ENCODE measurements at regions of chr9 and their contacts with region 1.

Region 1: DNA sequence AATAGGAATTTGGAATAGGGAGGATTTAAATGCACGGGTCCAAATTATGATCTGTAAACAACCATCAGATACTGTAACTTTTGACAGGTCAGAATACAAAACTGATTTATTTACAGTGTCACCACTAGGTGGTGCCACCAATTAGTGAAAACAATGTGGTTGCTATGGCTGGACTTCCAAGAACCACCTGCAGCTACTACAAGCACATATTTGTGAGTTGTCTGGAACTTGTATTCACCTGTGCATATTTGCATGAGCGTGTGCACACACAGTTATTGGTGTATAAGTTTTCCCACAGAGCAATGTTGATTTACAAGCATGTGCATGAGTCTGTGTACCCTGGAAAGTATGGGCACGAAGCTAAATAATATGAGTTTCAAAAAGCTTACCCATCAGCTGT is 3.0 kb upstream of the HRCT1 start:
- DNase-seq: peak; percentile 39
- H3K4me3 Mint-ChIP-seq: no peak overlapping the region
- H3K27ac Mint-ChIP-seq: no peak overlapping the region
- H3K4me1 Mint-ChIP-seq: peaks cover 34% of the 10 kb centered on the region
- H3K27me3 Mint-ChIP-seq: no peaks in the 10 kb centered on the region
- CTCF ChIP-seq: no peak

Region 2: DNA sequence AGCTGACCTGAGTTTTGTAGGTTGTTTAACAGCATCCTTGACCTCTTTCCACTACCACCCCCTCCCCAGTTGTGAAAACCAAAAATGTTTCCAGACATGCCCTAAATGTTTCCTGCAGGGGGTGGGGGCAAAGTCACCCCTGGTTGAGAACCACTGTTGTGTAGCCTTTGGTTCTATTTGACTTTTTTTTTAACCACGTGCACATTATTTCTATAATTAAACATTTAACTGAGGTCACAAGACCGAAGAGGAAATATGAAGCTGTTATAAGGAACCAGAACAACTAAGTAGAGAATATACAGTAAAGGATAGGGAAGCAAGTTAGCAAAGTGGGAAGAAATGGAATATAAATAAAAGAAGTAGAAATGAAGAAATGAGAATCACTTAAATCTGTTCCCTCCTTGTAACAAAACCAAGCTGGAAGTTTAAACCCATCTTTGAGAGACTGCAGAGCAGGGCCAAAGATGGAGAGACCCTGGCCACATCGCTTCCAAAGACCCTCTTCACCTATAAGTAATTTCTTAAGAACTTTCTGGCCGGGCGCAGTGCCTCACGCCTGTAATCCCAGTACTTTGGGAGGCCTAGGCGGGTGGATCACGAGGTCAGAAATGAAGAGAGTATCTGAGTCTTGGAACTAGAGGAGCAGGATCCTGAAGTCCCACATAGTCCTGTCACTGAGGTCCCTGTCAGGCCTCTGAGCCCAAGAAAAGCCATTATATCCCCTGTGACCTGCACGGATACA is 266.7 kb before region 1 on chr9:
- CTCF ChIA-PET with region 1: no interaction called
- intact Hi-C with region 1: no loop called
- DNase-seq: no peak
- H3K4me3 Mint-ChIP-seq: no peak overlapping the region
- H3K27ac Mint-ChIP-seq: no peak overlapping the region
- H3K4me1 Mint-ChIP-seq: no peaks in the 10 kb centered on the region
- H3K27me3 Mint-ChIP-seq: peaks cover 20% of the 10 kb centered on the region
- CTCF ChIP-seq: no peak

Region 3: DNA sequence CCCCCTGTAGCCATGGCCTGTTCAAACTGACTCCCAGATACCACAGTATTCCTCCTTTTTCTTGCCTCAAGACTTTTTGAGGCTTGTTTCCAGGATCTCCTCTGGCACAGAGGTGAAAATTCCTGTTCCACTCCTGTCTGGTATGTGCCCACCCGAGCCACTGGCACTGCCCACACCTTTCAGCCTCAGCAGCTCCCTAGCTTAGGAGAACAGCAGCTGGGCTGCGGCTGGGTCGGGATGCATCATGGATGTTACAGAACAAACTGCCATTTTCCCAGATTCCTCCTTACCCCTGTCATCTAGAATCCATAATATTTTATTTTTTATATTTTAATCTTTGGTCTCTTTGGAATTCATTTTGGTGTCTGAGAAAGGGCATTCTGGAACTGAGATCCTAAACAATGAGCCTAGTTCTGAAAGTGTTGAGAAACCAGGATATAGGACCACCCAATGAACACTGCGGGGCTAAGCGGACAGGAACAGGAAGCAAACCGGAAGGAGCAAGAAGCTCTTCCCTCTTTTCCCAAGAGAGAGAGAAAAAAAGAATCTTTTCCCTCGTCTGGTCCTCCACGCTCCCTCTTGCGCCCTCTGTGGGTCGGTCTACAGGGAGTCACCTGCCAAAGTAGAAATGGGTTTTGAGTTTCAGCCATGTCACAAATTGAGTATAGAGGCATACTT is 42.4 kb after region 1 on chr9:
- CTCF ChIA-PET with region 1: interaction called, 9 read pairs
- intact Hi-C with region 1: loop called (anchors 1 kb)
- DNase-seq: peak; percentile 72
- H3K4me3 Mint-ChIP-seq: no peak overlapping the region
- H3K27ac Mint-ChIP-seq: no peak overlapping the region
- H3K4me1 Mint-ChIP-seq: peaks cover 13% of the 10 kb centered on the region
- H3K27me3 Mint-ChIP-seq: no peaks in the 10 kb centered on the region
- CTCF ChIP-seq: peak; percentile 45

Region 4: DNA sequence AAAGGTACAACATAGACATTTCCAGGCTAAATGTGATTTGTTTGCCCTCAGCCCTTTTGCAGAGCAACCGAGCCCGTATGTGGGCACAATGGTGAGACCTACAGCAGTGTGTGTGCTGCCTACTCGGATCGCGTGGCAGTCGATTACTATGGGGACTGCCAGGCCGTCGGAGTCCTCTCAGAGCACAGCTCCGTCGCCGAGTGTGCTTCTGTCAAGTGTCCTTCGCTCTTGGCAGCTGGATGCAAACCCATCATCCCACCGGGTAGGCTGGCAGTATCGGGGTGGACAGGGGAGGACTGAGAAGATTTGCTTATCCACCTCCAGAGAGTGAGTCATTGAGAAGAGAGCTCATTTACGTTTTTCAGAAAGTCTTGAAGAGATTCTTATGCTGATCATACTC is 215.7 kb after region 1 on chr9:
- CTCF ChIA-PET with region 1: no interaction called
- intact Hi-C with region 1: no loop called
- DNase-seq: no peak
- H3K4me3 Mint-ChIP-seq: no peak overlapping the region
- H3K27ac Mint-ChIP-seq: no peak overlapping the region
- H3K4me1 Mint-ChIP-seq: no peaks in the 10 kb centered on the region
- H3K27me3 Mint-ChIP-seq: peaks cover 24% of the 10 kb centered on the region
- CTCF ChIP-seq: no peak